ENCODE measurements at regions of chr20 and their contacts with region 1.

Region 1: GRCh38 chr20:41533537-41534136 is 84.5 kb downstream of the CHD6 start:
- DNase-seq: no peak
- H3K4me3 ChIP-seq: no peak overlapping the region
- H3K27ac ChIP-seq: no peak overlapping the region
- H3K4me1 ChIP-seq: no peaks in the 10 kb centered on the region
- H3K27me3 ChIP-seq: no peaks in the 10 kb centered on the region
- CTCF ChIP-seq: no peak

Region 2: GRCh38 chr20:41411391-41411847 is 122.2 kb before region 1 on chr20:
- CTCF ChIA-PET with region 1: no interaction called
- POLR2A ChIA-PET with region 1: no interaction called
- intact Hi-C with region 1: no loop called
- DNase-seq: no peak
- H3K4me3 ChIP-seq: no peak overlapping the region
- H3K27ac ChIP-seq: no peak overlapping the region
- H3K4me1 ChIP-seq: no peaks in the 10 kb centered on the region
- H3K27me3 ChIP-seq: no peaks in the 10 kb centered on the region
- CTCF ChIP-seq: peak; percentile 70

Region 3: GRCh38 chr20:41547221-41547620 is 13.6 kb after region 1 on chr20:
- CTCF ChIA-PET with region 1: no interaction called
- POLR2A ChIA-PET with region 1: no interaction called
- intact Hi-C with region 1: no loop called
- DNase-seq: no peak
- H3K4me3 ChIP-seq: no peak overlapping the region
- H3K27ac ChIP-seq: no peak overlapping the region
- H3K4me1 ChIP-seq: no peaks in the 10 kb centered on the region
- H3K27me3 ChIP-seq: no peaks in the 10 kb centered on the region
- CTCF ChIP-seq: no peak

Region 4: GRCh38 chr20:41572010-41572560 is 38.4 kb after region 1 on chr20:
- CTCF ChIA-PET with region 1: interaction called, 10 read pairs
- POLR2A ChIA-PET with region 1: no interaction called
- intact Hi-C with region 1: no loop called
- DNase-seq: no peak
- H3K4me3 ChIP-seq: no peak overlapping the region
- H3K27ac ChIP-seq: no peak overlapping the region
- H3K4me1 ChIP-seq: no peaks in the 10 kb centered on the region
- H3K27me3 ChIP-seq: no peaks in the 10 kb centered on the region
- CTCF ChIP-seq: peak; percentile 60; the same call in 1 of the 2 replicates